Psoas muscle (tissue), 8 donors: ENCODE measurements at regions of chr10 and their contacts with region 1.

Region 1: DNA sequence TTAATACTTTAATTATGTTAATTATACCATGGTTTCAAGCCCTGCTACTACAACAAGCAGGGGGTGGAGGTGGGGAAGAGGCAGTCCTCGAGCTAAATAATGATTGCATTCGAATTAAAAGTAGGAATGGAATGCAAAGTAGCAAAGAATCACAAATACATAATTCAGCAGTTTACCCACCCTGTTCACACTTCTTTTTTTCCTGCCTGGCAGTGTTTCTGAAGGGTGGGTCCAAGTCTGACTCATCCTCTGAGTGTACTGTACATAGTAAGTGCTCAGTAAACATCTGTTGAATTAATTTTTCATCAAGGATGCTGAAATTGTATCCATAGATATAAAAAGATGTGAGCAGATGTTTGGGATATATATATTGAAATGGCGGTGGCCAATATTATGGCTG is 778.8 kb downstream of the LRMDA start:
- DNase-seq: no peak
- ATAC-seq: no peak
- H3K4me3 ChIP-seq: no peak overlapping the region
- H3K27ac ChIP-seq: no peak overlapping the region
- H3K4me1 ChIP-seq: no peaks in the 10 kb centered on the region
- H3K27me3 ChIP-seq: peaks cover 0 to 1% (median 0%) of the 10 kb centered on the region in 3 donors
- CTCF ChIP-seq: no peak

Region 2: GRCh38 chr10:75793848-75794247 is 416.4 kb before region 1 on chr10:
- intact Hi-C with region 1: loop called in 1 of 2 experiments (anchors 5 kb)
- DNase-seq: no peak
- ATAC-seq: no peak
- H3K4me3 ChIP-seq: no peak overlapping the region
- H3K27ac ChIP-seq: no peak overlapping the region
- H3K4me1 ChIP-seq: no peaks in the 10 kb centered on the region
- H3K27me3 ChIP-seq: no peaks in the 10 kb centered on the region
- CTCF ChIP-seq: no peak

Region 3: DNA sequence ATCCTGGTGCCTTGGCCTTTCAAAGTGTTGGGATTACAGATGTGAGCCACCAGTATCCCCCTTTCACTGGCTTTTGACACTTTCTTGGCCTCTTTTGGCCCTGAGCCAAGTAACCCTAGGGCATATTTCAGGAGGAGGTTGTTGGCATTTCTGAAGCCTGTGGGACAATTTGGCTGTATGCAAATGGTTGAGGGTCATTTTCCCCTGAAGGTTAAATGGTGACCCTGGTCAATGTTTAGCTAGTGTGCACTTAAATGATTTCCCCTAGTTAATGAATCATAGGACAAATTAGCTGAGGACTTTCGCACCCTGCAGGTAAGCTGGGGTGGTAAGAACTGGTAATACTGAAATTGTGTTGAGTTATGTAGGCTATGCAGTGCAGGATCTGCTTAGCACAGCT is 118.3 kb before region 1 on chr10:
- intact Hi-C with region 1: no loop called
- DNase-seq: no peak
- ATAC-seq: no peak
- H3K4me3 ChIP-seq: no peak overlapping the region
- H3K27ac ChIP-seq: no peak overlapping the region
- H3K4me1 ChIP-seq: peaks cover 8% of the 10 kb centered on the region
- H3K27me3 ChIP-seq: no peaks in the 10 kb centered on the region
- CTCF ChIP-seq: no peak

Region 4: GRCh38 chr10:76297780-76298281 is 87.6 kb after region 1 on chr10:
- intact Hi-C with region 1: no loop called
- DNase-seq: no peak
- ATAC-seq: no peak
- H3K4me3 ChIP-seq: no peak overlapping the region
- H3K27ac ChIP-seq: no peak overlapping the region
- H3K4me1 ChIP-seq: no peaks in the 10 kb centered on the region
- H3K27me3 ChIP-seq: peaks cover 0 to 3% (median 0%) of the 10 kb centered on the region in 3 donors
- CTCF ChIP-seq: no peak